ENCODE measurements at regions of chr6 and their contacts with region 1.

Region 1: DNA sequence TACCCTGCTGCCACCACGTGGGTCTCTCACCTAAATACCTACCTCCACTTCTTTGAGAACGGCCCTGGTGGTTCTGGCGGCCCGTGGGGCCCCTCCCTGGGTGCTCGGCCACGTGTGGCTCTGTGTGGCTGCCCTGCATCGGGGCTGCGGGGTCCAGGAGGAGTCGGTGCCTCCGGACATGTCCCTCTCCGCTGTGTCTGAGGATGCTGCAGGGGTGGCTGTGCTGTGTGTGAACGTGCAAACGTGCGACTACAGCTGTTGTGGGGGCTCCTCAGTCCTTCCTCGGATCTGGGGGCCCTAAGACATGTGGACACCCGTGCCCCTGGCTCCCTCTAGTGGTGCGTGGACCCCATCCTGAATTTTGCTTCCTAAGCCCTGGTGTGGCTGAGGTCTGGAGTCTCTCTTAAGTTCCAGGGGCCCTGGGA is 691.8 kb downstream of the QKI start:
- DNase-seq: peak; percentile 86
- ATAC-seq: peak; percentile 54

Region 2: DNA sequence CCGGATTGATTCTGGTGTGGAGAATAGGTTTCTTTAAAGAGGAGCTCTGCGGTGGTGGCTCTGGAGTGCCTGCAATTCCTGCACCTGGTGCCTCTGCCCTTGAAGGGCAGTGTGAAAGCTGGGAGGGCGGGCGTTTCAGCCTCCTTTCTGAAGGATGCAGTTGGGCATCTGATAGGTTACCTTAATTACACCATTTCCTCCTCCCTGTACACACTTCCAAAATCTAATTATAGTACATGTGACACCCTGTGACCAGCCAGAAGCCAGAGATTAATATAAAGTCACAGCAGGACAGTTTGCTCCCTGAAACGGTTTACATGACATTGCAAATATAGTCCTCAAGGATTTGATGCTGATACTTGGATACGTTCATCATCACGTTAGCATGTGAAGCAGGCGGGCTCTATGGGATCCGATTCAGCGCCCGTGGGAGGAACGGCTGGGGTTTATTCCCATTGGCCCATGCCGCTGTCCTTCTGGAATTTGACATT is 143.7 kb before region 1 on chr6:
- intact Hi-C with region 1: loop called (anchors 5 kb)
- DNase-seq: peak; percentile 82
- ATAC-seq: peak; percentile 82

Region 3: GRCh38 chr6:164195278-164195941 is 89.1 kb after region 1 on chr6:
- intact Hi-C with region 1: no loop called
- DNase-seq: peak; percentile 30
- ATAC-seq: peak; percentile 83

Measured in left ventricle myocardium superior (tissue), 1 donor.